Activated CD4-positive, alpha-beta memory T cell treated with anti-CD3 and anti-CD28 coated beads, Interleukin-2, amount 10 ng/mL, durations not matched to agents 7 days and 5 days (primary cell): ENCODE measurements at regions of chr9 and their contacts with region 1.

Region 1: DNA sequence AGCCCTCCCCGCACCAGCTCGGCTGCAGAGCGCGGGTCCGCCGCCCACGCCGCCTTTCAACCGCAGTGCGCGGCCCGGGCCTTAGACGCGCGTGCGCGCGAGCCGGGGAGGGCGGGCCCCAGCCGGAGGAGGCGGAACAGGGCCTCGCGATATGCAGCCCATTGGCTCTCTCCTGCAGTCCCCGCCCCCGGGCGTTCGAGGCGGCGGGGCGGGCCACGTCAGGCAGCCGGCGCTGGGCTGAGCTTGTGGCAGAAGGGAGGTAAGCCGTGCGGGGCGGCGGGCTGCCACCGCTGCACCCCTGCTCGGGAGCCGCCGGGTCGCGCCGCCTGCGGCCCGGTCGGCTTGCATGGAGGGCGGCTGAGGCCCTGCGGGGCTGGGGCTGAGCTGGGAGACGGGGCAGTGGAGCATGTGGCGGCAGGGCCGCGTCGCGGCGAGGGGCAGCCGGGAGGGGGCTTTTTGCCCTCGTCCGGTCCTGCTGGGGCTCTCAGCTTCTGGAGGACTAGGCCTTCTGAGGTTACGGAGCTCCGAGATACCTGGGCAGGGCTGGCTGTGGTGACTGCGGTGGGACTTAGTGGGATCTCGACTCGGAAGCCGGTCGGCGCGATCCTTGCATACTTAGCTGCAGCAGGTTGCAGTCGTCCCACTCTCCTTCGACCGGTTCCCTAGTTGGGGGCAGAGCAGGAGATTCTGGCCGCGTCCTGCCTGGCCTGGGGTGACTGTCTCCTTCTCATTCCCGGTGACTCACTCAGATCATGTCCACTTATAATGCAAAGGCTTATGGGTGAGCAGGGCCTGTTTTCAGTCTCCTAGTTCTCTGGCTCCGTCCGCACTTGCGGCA is at the start of gene FOCAD:
- DNase-seq: peak; percentile 96
- H3K4me3 Mint-ChIP-seq: peak within 1 kb of the TSS; percentile 91
- H3K27ac Mint-ChIP-seq: peak within 1 kb of the TSS; percentile 73
- H3K4me1 Mint-ChIP-seq: peaks cover 20% of the 10 kb centered on the region
- H3K27me3 Mint-ChIP-seq: no peaks in the 10 kb centered on the region
- total RNA-seq, gene FOCAD: 26.3 to 30.7 TPM

Region 2: DNA sequence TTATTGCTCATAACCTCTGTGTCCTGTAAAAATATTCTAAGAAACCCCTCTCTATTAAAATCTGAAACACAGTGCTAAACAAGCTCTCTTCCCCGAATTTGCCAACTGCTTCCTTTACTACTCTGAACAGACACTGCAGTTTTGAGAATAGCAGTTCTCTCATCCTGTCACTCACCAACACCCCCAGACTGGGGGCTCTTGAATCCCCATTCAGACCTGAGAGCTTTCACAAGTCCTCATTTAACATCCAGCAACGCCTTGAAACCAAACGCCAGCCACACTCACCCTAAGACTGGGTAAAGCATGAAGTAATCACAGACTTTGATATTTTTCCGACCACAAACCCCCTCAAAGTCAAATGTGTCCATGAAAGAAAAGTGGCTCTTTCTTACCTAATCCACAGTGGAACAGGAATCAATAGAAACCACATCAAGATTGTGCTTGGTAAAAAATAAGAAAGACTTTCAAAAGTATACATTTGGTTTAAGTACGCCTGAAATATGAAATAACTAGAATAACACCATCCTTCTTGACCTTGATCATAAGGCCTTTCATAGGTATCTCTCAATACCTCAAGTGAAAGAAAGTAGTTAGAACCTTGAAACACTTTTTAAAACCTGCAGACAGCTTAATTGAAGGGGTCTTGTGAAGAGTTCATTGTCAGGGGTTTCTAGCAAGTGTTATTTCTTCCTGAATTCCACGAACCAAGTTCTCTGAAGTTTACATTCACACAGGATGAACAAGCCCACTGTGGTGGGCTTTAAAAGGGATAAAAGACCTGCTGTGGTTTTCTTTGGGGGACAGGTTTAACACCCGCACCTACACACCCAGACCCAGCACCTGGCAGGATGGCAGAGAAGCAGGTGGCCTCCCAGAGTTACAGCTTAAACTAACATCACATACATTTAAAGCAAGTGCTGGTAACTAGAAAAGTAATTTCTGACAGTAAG is 474.6 kb before region 1 on chr9:
- CTCF ChIA-PET with region 1: no interaction called
- POLR2A ChIA-PET with region 1: interaction called, 10 read pairs
- DNase-seq: peak; percentile 73
- H3K4me3 Mint-ChIP-seq: peak overlapping the region; percentile 4
- H3K27ac Mint-ChIP-seq: peak overlapping the region; percentile 92
- H3K4me1 Mint-ChIP-seq: peaks cover 45% of the 10 kb centered on the region
- H3K27me3 Mint-ChIP-seq: no peaks in the 10 kb centered on the region

Region 3: GRCh38 chr9:20658677-20659473 is 25.4 kb before region 1 on chr9:
- CTCF ChIA-PET with region 1: interaction called, 3 read pairs
- POLR2A ChIA-PET with region 1: interaction called, 20 read pairs
- DNase-seq: peak; percentile 19
- H3K4me3 Mint-ChIP-seq: no peak overlapping the region
- H3K27ac Mint-ChIP-seq: peak overlapping the region; percentile 76
- H3K4me1 Mint-ChIP-seq: no peaks in the 10 kb centered on the region
- H3K27me3 Mint-ChIP-seq: no peaks in the 10 kb centered on the region

Region 4: GRCh38 chr9:20835364-20836286 is 151.4 kb after region 1 on chr9:
- CTCF ChIA-PET with region 1: no interaction called
- POLR2A ChIA-PET with region 1: no interaction called
- DNase-seq: no peak
- H3K4me3 Mint-ChIP-seq: no peak overlapping the region
- H3K27ac Mint-ChIP-seq: no peak overlapping the region
- H3K4me1 Mint-ChIP-seq: peaks cover 4% of the 10 kb centered on the region
- H3K27me3 Mint-ChIP-seq: no peaks in the 10 kb centered on the region

Region 5: GRCh38 chr9:21031091-21031807 is 347.0 kb after region 1 on chr9 and contains the start of gene HACD4:
- CTCF ChIA-PET with region 1: no interaction called
- POLR2A ChIA-PET with region 1: interaction called, 25 read pairs
- DNase-seq: peak; percentile 79
- H3K4me3 Mint-ChIP-seq: peak within 1 kb of the TSS; percentile 47
- H3K27ac Mint-ChIP-seq: peak within 1 kb of the TSS; percentile 78
- H3K4me1 Mint-ChIP-seq: peaks cover 25% of the 10 kb centered on the region
- H3K27me3 Mint-ChIP-seq: no peaks in the 10 kb centered on the region
- total RNA-seq, gene HACD4: 14.8 to 15.6 TPM